Lower leg skin (tissue), 4 donors: ENCODE measurements at regions of chr10 and their contacts with region 1.

Region 1: GRCh38 chr10:58268870-58269605 is at the start of gene CISD1:
- DNase-seq: peak; percentile 96 to 99
- H3K4me3 ChIP-seq: peak within 1 kb of the TSS; percentile 87
- CTCF ChIP-seq: no peak
- POLR2A ChIP-seq: no peak
- total RNA-seq, gene CISD1: 10.5 to 42.1 (median 13.1) TPM

Region 2: GRCh38 chr10:56522166-56522565 is 1746.9 kb before region 1 on chr10:
- intact Hi-C with region 1: no loop called
- DNase-seq: no peak
- H3K4me3 ChIP-seq: no peak overlapping the region
- CTCF ChIP-seq: no peak
- POLR2A ChIP-seq: no peak

Region 3: GRCh38 chr10:58189269-58189668 is 79.8 kb before region 1 on chr10:
- intact Hi-C with region 1: no loop called
- DNase-seq: no peak
- H3K4me3 ChIP-seq: no peak overlapping the region
- CTCF ChIP-seq: no peak
- POLR2A ChIP-seq: no peak

Region 4: DNA sequence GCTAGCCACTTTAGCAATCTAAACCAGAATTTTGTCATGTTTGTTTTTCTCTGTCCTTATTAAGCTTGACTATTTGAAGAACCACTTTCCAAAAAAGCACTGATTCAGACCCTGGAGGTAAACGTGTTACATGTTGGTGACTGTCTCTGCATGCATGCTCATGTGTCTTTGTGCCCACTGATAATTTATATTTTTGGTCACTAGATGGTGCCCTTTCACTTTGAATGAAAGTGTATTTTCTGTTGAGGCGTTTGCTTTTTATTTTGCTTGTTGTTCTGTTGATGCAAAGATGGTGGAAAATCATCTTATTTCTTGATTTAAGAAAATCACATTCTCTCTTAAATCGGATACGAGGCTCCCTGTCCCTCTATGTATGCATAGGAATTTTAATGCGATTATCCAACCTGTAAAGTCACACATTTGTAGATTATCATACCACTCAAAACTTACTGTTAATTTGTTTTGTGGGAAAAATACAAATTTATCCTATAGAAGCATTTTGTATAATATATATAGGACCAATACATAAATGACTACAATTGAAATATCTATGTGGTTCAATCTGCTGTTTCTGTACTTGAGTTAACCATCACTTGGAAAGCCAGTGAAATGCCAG is 512.9 kb after region 1 on chr10:
- intact Hi-C with region 1: loop called (anchors 5 kb)
- DNase-seq: no peak
- H3K4me3 ChIP-seq: no peak overlapping the region
- CTCF ChIP-seq: no peak
- POLR2A ChIP-seq: no peak